ENCODE measurements at regions of chr4 and their contacts with region 1.

Region 1: GRCh38 chr4:158811704-158812103 is 42.9 kb downstream of the FNIP2 start:
- DNase-seq: no peak
- ATAC-seq: peak; percentile 38
- H3K4me3 ChIP-seq: no peak overlapping the region; a peak in 2 of 6 replicates
- H3K27ac ChIP-seq: peak overlapping the region; percentile 74
- H3K4me1 ChIP-seq: peaks cover 88% of the 10 kb centered on the region
- H3K27me3 ChIP-seq: no peaks in the 10 kb centered on the region
- CTCF ChIP-seq: no peak
- EP300 ChIP-seq: no peak
- POLR2A ChIP-seq: no peak
- RAD21 ChIP-seq: no peak

Region 2: DNA sequence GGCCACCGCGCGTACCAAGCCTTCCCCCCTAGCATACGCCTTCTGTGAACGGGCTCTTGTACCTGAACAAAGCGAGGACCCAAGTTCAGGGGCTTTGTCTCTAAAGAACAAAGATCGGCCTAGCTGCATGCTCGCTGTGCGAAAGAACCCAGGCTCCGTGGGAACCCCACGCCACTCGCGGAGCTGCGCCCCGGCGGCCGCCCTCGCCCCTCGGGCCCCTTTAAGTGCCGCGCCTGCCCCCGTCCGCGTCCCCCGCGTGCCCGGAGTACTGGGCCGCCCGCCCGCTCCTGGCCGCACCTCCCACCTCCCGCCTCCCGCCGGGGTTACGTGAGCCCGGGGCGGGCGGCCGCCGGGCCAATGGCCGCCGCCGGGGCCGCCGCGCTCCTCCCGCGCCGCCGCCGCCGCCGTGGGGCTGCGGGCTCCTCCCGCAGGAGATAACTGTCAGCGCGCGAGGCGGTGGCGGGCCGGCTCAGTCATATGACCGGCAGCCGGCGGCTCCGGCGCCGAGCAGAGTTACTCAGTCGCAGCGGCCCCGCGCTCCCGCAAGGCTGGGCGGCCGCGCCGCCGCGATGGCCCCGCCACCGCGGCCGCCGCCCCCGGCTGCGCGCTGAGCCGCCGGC is 43.0 kb before region 1 on chr4 and contains the start of gene FNIP2:
- CTCF ChIA-PET with region 1: no interaction called
- POLR2A ChIA-PET with region 1: no interaction called
- in situ Hi-C with region 1: no loop called
- intact Hi-C with region 1: loop called (anchors 2 kb)
- DNase-seq: peak; percentile 56
- ATAC-seq: peak; percentile 96
- H3K4me3 ChIP-seq: peak within 1 kb of the TSS; percentile 91 to 99 (median 92)
- H3K27ac ChIP-seq: peak within 1 kb of the TSS; percentile 92
- H3K4me1 ChIP-seq: peaks cover 54% of the 10 kb centered on the region
- H3K27me3 ChIP-seq: no peaks in the 10 kb centered on the region; a peak in 1 of 5 replicates
- CTCF ChIP-seq: no peak; the same call in 1 of the 2 replicates
- EP300 ChIP-seq: no peak
- POLR2A ChIP-seq: peak; percentile 75 to 91
- RAD21 ChIP-seq: no peak; the same call in 1 of the 2 replicates
- total RNA-seq, gene FNIP2: 15.5 and 21.8 TPM in 2 replicates

Region 3: DNA sequence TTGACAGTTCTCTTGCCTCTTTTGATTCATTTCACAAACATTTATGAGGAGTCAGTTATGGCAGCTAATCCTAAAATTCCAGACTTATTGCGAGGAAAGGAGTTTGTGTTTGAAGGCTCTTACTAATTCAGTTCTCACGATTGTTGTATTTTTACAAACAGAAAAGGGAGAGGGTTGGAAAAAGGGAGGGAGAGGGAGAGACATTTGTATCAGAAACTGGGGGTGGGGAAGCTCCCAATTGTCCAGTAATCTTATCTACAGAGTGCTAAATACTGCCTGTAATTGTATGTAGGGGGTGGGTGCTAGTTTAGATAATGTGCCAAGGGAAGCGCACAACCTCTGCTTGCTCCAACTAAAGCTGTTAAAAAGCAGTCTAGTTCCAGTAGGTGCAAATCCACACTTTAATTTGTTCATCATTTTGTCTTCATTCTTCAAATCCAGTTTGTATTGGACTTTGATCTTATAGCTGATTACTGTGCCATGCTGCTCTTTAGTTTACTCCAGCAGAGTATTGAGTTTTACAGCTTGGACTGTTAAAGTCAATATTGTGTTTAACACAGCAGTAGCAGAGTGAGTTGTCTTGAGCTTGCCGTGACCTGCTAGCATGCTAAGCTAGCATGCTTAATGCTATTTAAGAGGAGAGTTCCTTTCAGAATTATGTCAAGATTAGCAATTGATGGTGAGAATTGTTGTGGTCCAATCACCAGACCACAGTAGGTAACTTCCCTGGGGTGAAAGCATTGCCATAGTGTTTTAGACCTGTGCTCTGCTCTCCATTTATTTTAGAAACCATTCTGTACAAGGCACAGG is 28.9 kb before region 1 on chr4:
- CTCF ChIA-PET with region 1: no interaction called
- POLR2A ChIA-PET with region 1: interaction called, 5 read pairs
- in situ Hi-C with region 1: no loop called
- intact Hi-C with region 1: loop called (anchors 2 kb)
- DNase-seq: peak; percentile 72
- ATAC-seq: peak; percentile 99
- H3K4me3 ChIP-seq: peak overlapping the region in 2 of 3 experiments; percentile 12 to 17; a peak in 1 of 6 replicates
- H3K27ac ChIP-seq: peak overlapping the region; percentile 68
- H3K4me1 ChIP-seq: peaks cover 77% of the 10 kb centered on the region
- H3K27me3 ChIP-seq: no peaks in the 10 kb centered on the region
- CTCF ChIP-seq: no peak
- EP300 ChIP-seq: peak in 1 of 2 experiments; percentile 25; a peak in 1 of 4 replicates
- POLR2A ChIP-seq: no peak
- RAD21 ChIP-seq: no peak

Region 4: GRCh38 chr4:159052315-159052714 is 240.6 kb after region 1 on chr4:
- CTCF ChIA-PET with region 1: no interaction called
- POLR2A ChIA-PET with region 1: no interaction called
- in situ Hi-C with region 1: no loop called
- intact Hi-C with region 1: no loop called
- DNase-seq: no peak
- ATAC-seq: no peak
- H3K4me3 ChIP-seq: no peak overlapping the region
- H3K27ac ChIP-seq: no peak overlapping the region
- H3K4me1 ChIP-seq: peaks cover 13% of the 10 kb centered on the region
- H3K27me3 ChIP-seq: 0 out of 5 replicates have a peak, but pooled peaks cover 0 to 1% of the 10 kb centered on the region in 2 experiments
- CTCF ChIP-seq: no peak
- EP300 ChIP-seq: no peak
- POLR2A ChIP-seq: no peak
- RAD21 ChIP-seq: no peak

Measured in HepG2 (cell line).